Lower lobe of right lung (tissue), 2 donors: ENCODE measurements at regions of chr12 and their contacts with region 1.

Region 1: GRCh38 chr12:106282457-106283097 is 20.0 kb upstream of the TCP11L2 start:
- DNase-seq: peak; percentile 63
- ATAC-seq: peak; percentile 90 to 93
- H3K4me3 ChIP-seq: no peak overlapping the region
- H3K27ac ChIP-seq: no peak overlapping the region
- H3K4me1 ChIP-seq: no peaks in the 10 kb centered on the region
- H3K27me3 ChIP-seq: no peaks in the 10 kb centered on the region
- CTCF ChIP-seq: peak; percentile 72

Region 2: GRCh38 chr12:106226884-106227640 is 55.5 kb before region 1 on chr12:
- intact Hi-C with region 1: loop called (anchors 5 kb)
- DNase-seq: no peak
- ATAC-seq: peak; percentile 76 to 86
- H3K4me3 ChIP-seq: no peak overlapping the region
- H3K27ac ChIP-seq: peak overlapping the region; percentile 71
- H3K4me1 ChIP-seq: peaks cover 12% of the 10 kb centered on the region
- H3K27me3 ChIP-seq: no peaks in the 10 kb centered on the region
- CTCF ChIP-seq: peak; percentile 76